ENCODE measurements at regions of chr5 and their contacts with region 1.

Region 1: DNA sequence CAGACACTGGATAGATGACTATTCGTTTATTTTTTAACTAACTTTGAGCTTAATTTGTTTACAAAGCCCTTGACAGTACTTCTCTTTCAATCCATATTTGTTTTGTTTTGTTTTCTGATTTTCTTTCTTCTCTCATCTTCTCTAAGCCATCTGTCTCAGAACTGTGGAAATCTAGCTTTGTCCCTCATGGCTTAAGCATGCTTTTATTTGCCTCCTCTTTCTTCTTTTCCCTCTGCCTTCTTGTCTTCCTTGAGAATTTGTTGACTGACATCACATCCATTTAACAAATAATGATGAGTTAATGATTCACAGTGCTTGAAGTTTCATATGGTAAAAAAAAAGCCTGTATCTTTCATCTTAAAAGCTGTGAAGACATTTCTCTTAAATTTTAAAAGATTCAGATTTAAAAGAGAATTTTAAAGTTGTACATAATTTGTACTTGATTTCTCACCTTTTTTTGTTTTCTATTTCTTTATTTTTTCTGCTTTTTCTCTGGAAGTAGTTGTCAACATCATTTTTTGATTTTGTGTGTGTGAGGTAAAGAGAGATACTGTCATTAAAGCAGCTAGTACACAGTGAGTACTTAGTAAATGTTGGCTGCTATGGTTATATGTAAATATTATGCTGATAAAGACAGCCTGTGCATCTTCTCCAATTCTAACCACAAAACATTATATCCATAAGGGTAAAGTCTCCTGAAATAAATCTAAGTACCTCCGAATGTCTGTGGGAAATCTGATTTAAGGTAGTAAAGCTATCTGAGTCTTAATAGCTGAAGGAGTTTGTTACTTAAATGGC is 13.9 kb upstream of the SGCD start:
- DNase-seq: no peak
- ATAC-seq: peak in 3 of 4 donors; percentile 45 to 67 (median 47)
- H3K4me3 ChIP-seq: no peak overlapping the region
- H3K27ac ChIP-seq: no peak overlapping the region
- H3K4me1 ChIP-seq: peaks cover 0 to 6% (median 0%) of the 10 kb centered on the region in 12 donors
- H3K27me3 ChIP-seq: no peaks in the 10 kb centered on the region
- CTCF ChIP-seq: no peak
- POLR2A ChIP-seq: no peak

Region 2: DNA sequence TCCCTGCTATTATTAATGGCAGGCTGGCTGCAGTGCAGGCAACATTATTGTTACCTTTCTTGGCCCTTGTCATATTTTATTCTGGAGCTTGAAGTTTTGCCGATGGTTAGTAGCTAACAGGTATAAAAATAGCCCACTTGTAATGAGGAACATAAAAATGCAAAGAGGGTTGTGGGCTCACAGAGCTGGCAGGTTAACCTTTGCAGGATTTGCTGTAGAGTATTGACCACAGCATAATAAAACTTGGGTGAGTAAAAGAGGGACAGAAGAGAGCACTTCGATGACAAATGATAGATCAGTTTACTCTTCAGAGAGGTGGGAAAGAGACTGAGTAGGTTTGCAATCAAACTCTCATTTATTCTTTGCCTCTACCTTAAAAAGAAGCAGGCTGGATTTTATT is 35.8 kb before region 1 on chr5:
- intact Hi-C with region 1: loop called in 1 of 10 experiments (anchors 5 kb)
- DNase-seq: no peak
- ATAC-seq: no peak
- H3K4me3 ChIP-seq: no peak overlapping the region
- H3K27ac ChIP-seq: peak overlapping the region in 1 of 12 donors; percentile 23
- H3K4me1 ChIP-seq: peaks cover 0 to 27% (median 7%) of the 10 kb centered on the region in 12 donors
- H3K27me3 ChIP-seq: no peaks in the 10 kb centered on the region
- CTCF ChIP-seq: no peak
- POLR2A ChIP-seq: no peak